IMR-90 (cell line): ENCODE measurements at regions of chr11 and their contacts with region 1.

Region 1: DNA sequence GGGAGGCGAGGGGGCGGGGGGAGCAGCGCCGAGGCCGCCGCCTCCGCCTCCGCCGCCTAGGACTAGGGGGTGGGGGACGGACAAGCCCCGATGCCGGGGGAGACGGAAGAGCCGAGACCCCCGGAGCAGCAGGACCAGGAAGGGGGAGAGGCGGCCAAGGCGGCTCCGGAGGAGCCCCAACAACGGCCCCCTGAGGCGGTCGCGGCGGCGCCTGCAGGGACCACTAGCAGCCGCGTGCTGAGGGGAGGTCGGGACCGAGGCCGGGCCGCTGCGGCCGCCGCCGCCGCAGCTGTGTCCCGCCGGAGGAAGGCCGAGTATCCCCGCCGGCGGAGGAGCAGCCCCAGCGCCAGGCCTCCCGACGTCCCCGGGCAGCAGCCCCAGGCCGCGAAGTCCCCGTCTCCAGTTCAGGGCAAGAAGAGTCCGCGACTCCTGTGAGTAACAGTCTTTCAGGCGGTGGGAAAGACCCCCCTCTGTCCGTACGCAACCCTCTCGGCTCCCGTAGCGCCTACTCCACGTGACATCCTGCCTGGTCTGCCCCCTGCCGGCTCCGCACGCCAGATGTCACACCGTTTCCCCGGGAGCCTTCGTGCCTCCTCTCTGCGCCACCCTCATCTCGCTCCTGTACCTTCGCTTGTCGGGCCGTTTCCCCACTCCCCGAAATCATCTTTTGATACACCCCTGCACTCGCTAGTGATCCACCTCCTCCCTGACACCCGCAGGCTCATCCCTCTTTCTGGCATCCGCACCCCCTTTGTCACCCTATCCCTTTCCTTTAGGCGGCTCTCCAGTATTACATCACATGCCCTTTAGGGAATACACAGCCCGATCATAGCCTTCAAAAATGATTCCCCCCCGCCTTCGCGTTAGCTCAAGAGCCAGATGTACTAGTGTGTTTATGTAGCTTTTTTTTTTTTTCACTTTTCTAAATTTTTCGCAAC is 598 bp downstream of the ZFP91 start:
- DNase-seq: peak; percentile 91
- ATAC-seq: peak; percentile 24
- H3K4me3 ChIP-seq: peak overlapping the region; percentile 74
- H3K27ac ChIP-seq: peak overlapping the region; percentile 83
- H3K4me1 ChIP-seq: peaks cover 8% of the 10 kb centered on the region
- H3K27me3 ChIP-seq: no peaks in the 10 kb centered on the region
- CTCF ChIP-seq: peak; percentile 84
- POLR2A ChIP-seq: peak; percentile 77
- RAD21 ChIP-seq: peak; percentile 34

Region 2: GRCh38 chr11:58594826-58595225 is 15.4 kb after region 1 on chr11:
- CTCF ChIA-PET with region 1: no interaction called
- POLR2A ChIA-PET with region 1: no interaction called
- dilution Hi-C with region 1: no loop called
- in situ Hi-C with region 1: no loop called
- intact Hi-C with region 1: loop called (anchors 2 kb)
- DNase-seq: no peak
- ATAC-seq: peak; percentile 19
- H3K4me3 ChIP-seq: no peak overlapping the region
- H3K27ac ChIP-seq: no peak overlapping the region
- H3K4me1 ChIP-seq: peaks cover 10% of the 10 kb centered on the region
- H3K27me3 ChIP-seq: no peaks in the 10 kb centered on the region
- CTCF ChIP-seq: no peak
- POLR2A ChIP-seq: no peak
- RAD21 ChIP-seq: no peak

Region 3: DNA sequence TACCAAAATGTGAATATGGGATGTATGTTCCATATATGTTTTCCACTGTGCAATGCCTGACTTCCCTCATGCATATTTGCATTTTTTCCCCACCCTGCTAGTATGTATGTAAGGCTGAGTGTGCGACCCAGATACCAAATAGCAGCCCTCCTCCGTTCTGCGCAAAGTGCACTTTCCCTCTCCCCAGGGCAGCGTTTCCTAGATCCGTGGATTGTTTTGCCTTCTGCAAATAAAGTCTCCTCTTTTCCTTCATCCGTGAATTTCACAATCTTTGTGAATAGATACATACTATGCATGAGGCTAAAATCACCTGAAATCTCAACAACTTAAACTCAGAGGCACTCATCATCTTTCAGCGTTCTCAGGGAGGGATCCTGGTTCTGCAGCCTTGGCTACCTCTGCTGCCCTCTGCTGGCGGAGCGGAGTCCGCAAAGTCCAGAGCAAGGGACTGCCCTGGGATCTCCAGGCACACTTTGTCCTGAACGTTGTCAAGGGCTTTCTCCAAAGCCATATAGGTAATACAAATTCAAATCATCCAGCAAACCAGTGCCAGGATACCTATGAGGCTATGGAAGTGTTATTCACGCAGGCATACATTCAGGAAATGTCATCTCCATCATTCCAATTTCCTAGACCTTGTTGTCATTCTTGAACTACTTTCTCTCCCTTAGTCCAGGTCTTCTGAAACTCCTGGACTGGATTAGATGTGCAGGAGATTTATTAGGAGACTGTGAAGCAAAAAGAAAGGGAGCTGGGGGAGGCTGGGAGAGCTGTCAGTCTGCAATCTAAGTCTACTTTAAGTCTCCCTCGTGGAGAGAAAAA is 96.1 kb after region 1 on chr11:
- CTCF ChIA-PET with region 1: interaction called, 5 read pairs
- POLR2A ChIA-PET with region 1: no interaction called
- dilution Hi-C with region 1: no loop called
- in situ Hi-C with region 1: loop called (anchors 5 kb)
- intact Hi-C with region 1: loop called (anchors 1 kb)
- DNase-seq: peak; percentile 59
- ATAC-seq: peak; percentile 100
- H3K4me3 ChIP-seq: no peak overlapping the region
- H3K27ac ChIP-seq: no peak overlapping the region
- H3K4me1 ChIP-seq: no peaks in the 10 kb centered on the region
- H3K27me3 ChIP-seq: peaks cover 4% of the 10 kb centered on the region
- CTCF ChIP-seq: peak; percentile 91
- POLR2A ChIP-seq: no peak
- RAD21 ChIP-seq: peak; percentile 81

Region 4: DNA sequence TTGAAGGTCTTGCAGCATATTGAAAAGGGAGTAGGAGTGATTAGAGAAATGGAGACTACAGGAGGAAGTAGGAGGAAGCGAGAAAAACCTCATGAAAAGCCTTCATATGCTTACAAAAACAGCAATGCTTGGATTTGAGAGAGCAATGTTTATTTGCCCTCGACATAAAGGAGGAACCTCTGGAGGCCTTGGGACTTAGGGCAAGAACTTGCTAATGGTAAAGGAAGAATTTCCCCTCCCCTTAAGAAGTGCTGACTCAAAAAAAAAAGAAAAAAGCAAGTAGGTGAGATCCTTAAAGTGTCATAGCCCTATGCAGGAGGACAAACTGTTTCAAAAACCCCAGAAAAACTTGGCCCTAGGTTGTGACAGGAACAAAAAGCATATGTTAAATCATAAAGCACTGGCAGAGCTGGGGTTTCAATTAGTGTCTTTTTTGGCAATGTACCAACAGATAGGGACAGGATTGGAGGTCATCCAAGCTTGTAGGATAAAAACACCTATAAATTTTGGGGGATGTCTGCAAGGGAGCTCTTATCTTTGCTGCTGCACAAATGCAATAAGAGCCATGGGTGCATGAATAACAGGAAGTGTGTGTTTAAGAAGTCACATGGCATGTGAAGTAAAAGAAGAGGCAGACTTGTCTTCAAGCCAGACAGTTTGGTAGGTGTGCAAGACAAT is 147.4 kb after region 1 on chr11:
- CTCF ChIA-PET with region 1: no interaction called
- POLR2A ChIA-PET with region 1: no interaction called
- dilution Hi-C with region 1: no loop called
- in situ Hi-C with region 1: no loop called
- intact Hi-C with region 1: no loop called
- DNase-seq: no peak
- ATAC-seq: no peak
- H3K4me3 ChIP-seq: no peak overlapping the region
- H3K27ac ChIP-seq: no peak overlapping the region
- H3K4me1 ChIP-seq: no peaks in the 10 kb centered on the region
- H3K27me3 ChIP-seq: peaks cover 2% of the 10 kb centered on the region
- CTCF ChIP-seq: no peak
- POLR2A ChIP-seq: no peak
- RAD21 ChIP-seq: no peak

Region 5: GRCh38 chr11:58900479-58901420 is 321.3 kb after region 1 on chr11:
- CTCF ChIA-PET with region 1: no interaction called
- POLR2A ChIA-PET with region 1: no interaction called
- dilution Hi-C with region 1: no loop called
- in situ Hi-C with region 1: loop called (anchors 10 kb)
- intact Hi-C with region 1: loop called (anchors 5 kb)
- DNase-seq: peak; percentile 73
- ATAC-seq: peak; percentile 57
- H3K4me3 ChIP-seq: no peak overlapping the region
- H3K27ac ChIP-seq: no peak overlapping the region
- H3K4me1 ChIP-seq: no peaks in the 10 kb centered on the region; the same call in 1 of the 2 replicates
- H3K27me3 ChIP-seq: no peaks in the 10 kb centered on the region
- CTCF ChIP-seq: peak; percentile 74
- POLR2A ChIP-seq: no peak
- RAD21 ChIP-seq: peak; percentile 62

Region 6: GRCh38 chr11:59550368-59550841 is 970.9 kb after region 1 on chr11:
- CTCF ChIA-PET with region 1: no interaction called
- POLR2A ChIA-PET with region 1: no interaction called
- dilution Hi-C with region 1: no loop called
- in situ Hi-C with region 1: loop called (anchors 25 kb)
- intact Hi-C with region 1: loop called (anchors 10 kb)
- DNase-seq: peak; percentile 97
- ATAC-seq: peak; percentile 90
- H3K4me3 ChIP-seq: peak overlapping the region; percentile 54
- H3K27ac ChIP-seq: peak overlapping the region; percentile 48; the same call in 1 of the 2 replicates
- H3K4me1 ChIP-seq: 0 out of 2 replicates have a peak, but pooled peaks cover 2% of the 10 kb centered on the region
- H3K27me3 ChIP-seq: no peaks in the 10 kb centered on the region
- CTCF ChIP-seq: peak; percentile 49
- POLR2A ChIP-seq: no peak
- RAD21 ChIP-seq: peak; percentile 33